Activated CD4-positive, alpha-beta T cell treated with anti-CD3 and anti-CD28 coated beads, Interleukin-2, amount 10 ng/mL, durations not matched to agents 7 days and 5 days (primary cell): ENCODE measurements at regions of chr1 and their contacts with region 1.

Region 1: GRCh38 chr1:26279456-26280332 is at the start of gene SH3BGRL3:
- DNase-seq: peak; percentile 89
- H3K4me3 Mint-ChIP-seq: peak within 1 kb of the TSS; percentile 86
- H3K27ac Mint-ChIP-seq: peak within 1 kb of the TSS; percentile 90
- H3K4me1 Mint-ChIP-seq: peaks cover 86% of the 10 kb centered on the region
- H3K27me3 Mint-ChIP-seq: no peaks in the 10 kb centered on the region
- total RNA-seq, gene SH3BGRL3: 606 to 707 TPM

Region 2: DNA sequence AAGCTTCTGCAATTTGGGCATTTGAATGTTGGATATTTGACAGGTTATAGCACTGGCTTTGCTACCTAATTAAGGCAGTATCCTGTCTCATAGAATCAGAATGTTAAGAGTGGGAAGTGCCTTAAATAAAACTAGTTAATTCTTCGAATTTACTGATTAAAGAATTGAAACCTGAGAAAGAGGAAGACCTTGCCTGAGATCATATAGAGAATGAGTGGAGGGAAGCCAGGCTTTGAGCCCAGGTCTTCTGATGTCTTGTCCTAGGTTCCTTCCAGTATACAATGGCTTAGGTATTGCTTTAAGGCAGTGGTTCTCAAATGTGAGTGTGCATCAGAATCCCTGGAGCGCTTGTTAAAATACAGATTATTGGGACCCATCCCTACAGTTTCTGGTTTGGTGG is 20.7 kb before region 1 on chr1:
- CTCF ChIA-PET with region 1: interaction called, 10 read pairs
- POLR2A ChIA-PET with region 1: no interaction called
- DNase-seq: no peak
- H3K4me3 Mint-ChIP-seq: no peak overlapping the region
- H3K27ac Mint-ChIP-seq: no peak overlapping the region
- H3K4me1 Mint-ChIP-seq: no peaks in the 10 kb centered on the region
- H3K27me3 Mint-ChIP-seq: no peaks in the 10 kb centered on the region

Region 3: DNA sequence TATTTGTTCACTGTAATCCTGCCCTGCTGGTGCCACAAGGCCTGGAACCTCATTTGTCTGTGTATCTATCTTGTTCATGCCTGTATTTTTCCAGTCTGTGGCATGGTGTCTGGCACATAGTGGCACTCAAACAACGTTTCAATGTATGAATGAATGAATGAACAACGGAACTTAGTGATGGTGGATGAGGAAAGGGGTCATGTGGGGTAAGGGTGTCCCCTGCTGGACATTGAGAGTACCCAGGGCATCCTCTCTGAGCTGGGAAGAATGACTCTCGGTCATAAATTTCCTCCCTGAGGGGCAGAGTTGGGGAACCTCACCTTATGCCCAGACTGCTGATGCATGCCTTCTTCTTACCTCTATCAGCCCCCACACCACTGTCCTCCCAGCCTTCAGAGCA is 111.8 kb after region 1 on chr1:
- CTCF ChIA-PET with region 1: interaction called, 11 read pairs
- POLR2A ChIA-PET with region 1: no interaction called
- DNase-seq: peak; percentile 69
- H3K4me3 Mint-ChIP-seq: no peak overlapping the region
- H3K27ac Mint-ChIP-seq: peak overlapping the region; percentile 43
- H3K4me1 Mint-ChIP-seq: peaks cover 52% of the 10 kb centered on the region
- H3K27me3 Mint-ChIP-seq: peaks cover 6% of the 10 kb centered on the region